GM12878 (cell line): ENCODE measurements at regions of chr19 and their contacts with region 1.

Region 1: GRCh38 chr19:47130591-47131227 is at the start of gene SAE1:
- DNase-seq: peak; percentile 95
- ATAC-seq: peak; percentile 92
- H3K4me3 ChIP-seq: peak within 1 kb of the TSS; percentile 94
- H3K27ac ChIP-seq: peak within 1 kb of the TSS; percentile 90
- H3K4me1 ChIP-seq: peaks cover 3% of the 10 kb centered on the region; the same call in 1 of the 2 replicates
- H3K27me3 ChIP-seq: no peaks in the 10 kb centered on the region
- CTCF ChIP-seq: peak; percentile 53 to 81 (median 56); a peak in 5 of 6 replicates
- EP300 ChIP-seq: no peak
- POLR2A ChIP-seq: peak; percentile 94
- RAD21 ChIP-seq: no peak; the same call in 1 of the 2 replicates
- polyA plus RNA-seq, gene SAE1: 62.0 to 90.0 TPM

Region 2: DNA sequence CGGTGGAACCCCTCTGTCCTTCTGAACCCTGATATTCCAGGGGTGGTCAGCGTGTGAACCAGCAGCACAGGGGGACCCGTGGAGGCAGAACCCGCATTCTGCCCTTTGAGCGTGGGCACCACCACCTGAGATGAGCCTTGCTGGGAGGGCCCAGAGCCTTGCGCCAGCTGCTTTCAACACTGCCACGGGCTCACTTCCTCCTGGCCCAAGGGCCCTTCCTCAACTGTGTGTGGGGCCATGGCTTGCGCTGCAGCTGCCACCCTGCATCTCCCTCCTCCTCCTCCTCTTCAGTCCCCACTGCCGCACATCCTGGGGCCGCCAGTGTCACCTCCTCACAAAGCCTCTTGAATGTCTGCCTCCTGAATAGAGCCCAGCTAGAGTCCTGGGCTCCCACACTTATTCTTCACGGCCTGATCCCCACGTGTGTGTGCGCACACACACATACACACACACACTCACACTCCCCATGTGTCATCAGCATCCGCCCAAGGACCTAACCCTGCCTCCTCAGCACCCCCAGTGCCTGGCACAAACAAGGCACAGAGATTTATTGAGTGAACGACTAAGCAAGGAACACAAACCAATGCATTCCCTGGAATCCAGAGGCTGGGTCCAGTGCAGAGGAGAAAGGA is 55.4 kb before region 1 on chr19:
- CTCF ChIA-PET with region 1: interaction called, 77 read pairs
- POLR2A ChIA-PET with region 1: no interaction called
- RAD21 ChIA-PET with region 1: interaction called, 39 read pairs
- SMC1A ChIA-PET with region 1: interaction called, 17 read pairs
- in situ Hi-C with region 1: loop called (anchors 5 kb)
- intact Hi-C with region 1: loop called (anchors 1 kb)
- DNase-seq: no peak
- ATAC-seq: no peak
- H3K4me3 ChIP-seq: no peak overlapping the region
- H3K27ac ChIP-seq: no peak overlapping the region
- H3K4me1 ChIP-seq: no peaks in the 10 kb centered on the region
- H3K27me3 ChIP-seq: no peaks in the 10 kb centered on the region
- CTCF ChIP-seq: no peak
- EP300 ChIP-seq: no peak
- POLR2A ChIP-seq: 0 out of 2 replicates have a peak, but pooled peaks have one; percentile 21
- RAD21 ChIP-seq: no peak

Region 3: GRCh38 chr19:47152224-47153017 is 21.7 kb after region 1 on chr19:
- CTCF ChIA-PET with region 1: interaction called, 19 read pairs
- POLR2A ChIA-PET with region 1: interaction called, 10 read pairs
- RAD21 ChIA-PET with region 1: interaction called, 5 read pairs
- SMC1A ChIA-PET with region 1: interaction called, 3 read pairs
- in situ Hi-C with region 1: no loop called
- intact Hi-C with region 1: no loop called
- DNase-seq: no peak
- ATAC-seq: no peak
- H3K4me3 ChIP-seq: no peak overlapping the region
- H3K27ac ChIP-seq: no peak overlapping the region
- H3K4me1 ChIP-seq: peaks cover 14% of the 10 kb centered on the region
- H3K27me3 ChIP-seq: no peaks in the 10 kb centered on the region
- CTCF ChIP-seq: no peak
- EP300 ChIP-seq: no peak
- POLR2A ChIP-seq: no peak
- RAD21 ChIP-seq: no peak

Region 4: DNA sequence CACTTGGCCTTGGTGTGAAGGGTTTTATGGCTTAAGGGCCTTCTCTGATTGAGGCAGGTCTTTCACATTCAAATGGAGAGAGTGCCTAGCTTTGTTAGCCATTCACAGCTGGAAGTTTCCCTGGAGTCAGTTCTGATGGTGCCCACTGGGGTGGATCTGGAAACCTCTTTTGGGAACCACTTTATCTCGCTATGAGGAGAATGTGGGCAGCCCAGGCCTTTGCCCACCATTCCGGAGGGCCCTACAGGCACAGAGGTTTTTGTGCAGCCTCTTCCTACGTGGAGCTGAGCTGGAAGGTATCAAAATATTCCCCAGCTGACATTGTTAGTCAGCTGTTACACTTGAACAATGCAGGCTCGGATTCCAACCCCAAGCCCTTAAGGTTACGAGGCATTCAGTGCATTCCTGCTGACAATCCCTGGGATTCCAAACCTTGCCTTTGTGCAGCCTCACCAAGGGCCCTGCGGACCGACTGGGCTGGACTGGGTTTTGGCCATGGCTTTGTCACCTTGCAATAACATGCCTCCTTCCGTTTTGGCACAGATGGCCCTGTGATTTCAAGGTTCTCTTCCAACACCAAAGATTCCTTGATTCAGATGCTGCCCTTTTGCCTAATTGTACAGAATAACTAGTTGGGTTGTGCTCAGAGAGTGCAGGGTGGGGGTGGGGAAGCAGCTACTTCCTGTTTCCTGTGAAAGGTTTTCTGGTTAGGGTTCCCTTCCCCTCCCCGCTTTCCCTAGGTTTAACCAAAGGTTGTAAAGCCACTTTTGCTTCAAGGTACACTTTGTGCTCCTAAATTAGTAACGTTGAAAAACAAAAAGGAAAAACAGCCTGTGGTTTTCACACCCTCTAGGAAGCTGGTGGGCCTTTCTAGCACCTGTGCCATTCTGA is 27.0 kb after region 1 on chr19:
- CTCF ChIA-PET with region 1: interaction called, 7 read pairs
- POLR2A ChIA-PET with region 1: interaction called, 10 read pairs
- RAD21 ChIA-PET with region 1: interaction called, 5 read pairs
- SMC1A ChIA-PET with region 1: interaction called, 5 read pairs
- in situ Hi-C with region 1: no loop called
- intact Hi-C with region 1: no loop called
- DNase-seq: no peak
- ATAC-seq: peak; percentile 62
- H3K4me3 ChIP-seq: no peak overlapping the region
- H3K27ac ChIP-seq: peak overlapping the region; percentile 8
- H3K4me1 ChIP-seq: peaks cover 24% of the 10 kb centered on the region
- H3K27me3 ChIP-seq: no peaks in the 10 kb centered on the region
- CTCF ChIP-seq: no peak
- EP300 ChIP-seq: no peak
- POLR2A ChIP-seq: no peak
- RAD21 ChIP-seq: no peak